Endothelial cell of umbilical vein (primary cell): ENCODE measurements at regions of chr1 and their contacts with region 1.

Region 1: DNA sequence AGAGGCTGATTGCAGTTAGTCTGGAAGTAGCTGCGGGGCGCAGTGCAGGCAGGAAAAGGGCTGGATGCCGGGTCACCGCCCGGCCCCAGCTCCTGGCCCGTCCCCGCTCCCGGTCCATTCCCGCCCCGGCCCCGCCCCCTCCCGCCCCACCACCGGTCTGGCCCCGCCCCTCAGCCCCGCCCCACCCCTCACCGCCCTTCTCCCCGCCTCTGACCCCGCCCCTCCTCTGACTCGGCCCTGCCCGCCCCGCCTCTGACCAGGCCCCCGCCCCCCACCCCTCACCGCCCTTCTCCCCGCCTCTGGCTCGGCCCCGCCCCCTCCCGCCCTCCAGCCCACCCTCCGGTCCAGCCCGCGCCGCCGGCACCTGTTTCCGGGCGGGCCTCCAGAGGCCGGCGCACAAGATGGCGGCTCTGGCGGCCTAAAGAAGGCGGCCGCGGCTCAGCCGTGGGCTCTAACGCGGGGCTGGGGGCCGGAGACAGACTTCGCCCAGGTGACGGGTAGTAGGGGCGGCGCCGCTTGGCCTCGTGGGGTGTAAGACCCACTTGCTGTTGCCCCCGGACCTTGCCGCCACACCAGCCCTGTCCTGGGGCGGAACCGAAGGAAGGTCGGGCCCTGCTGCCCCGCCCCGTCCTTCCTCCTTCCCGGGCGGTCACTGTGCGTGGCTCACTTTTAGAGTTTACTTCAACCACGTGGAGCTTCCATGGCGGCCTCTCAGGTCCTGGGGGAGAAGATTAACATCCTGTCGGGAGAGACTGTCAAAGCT is at the start of gene UBIAD1:
- DNase-seq: peak; percentile 87
- H3K4me3 ChIP-seq: peak within 1 kb of the TSS; percentile 52 to 77 (median 66)
- H3K27ac ChIP-seq: peak within 1 kb of the TSS; percentile 93
- H3K4me1 ChIP-seq: peaks cover 13% of the 10 kb centered on the region
- H3K27me3 ChIP-seq: no peaks in the 10 kb centered on the region
- CTCF ChIP-seq: no peak
- POLR2A ChIP-seq: peak; percentile 80
- total RNA-seq, gene UBIAD1: 12.7 and 13.0 TPM in 2 replicates

Region 2: DNA sequence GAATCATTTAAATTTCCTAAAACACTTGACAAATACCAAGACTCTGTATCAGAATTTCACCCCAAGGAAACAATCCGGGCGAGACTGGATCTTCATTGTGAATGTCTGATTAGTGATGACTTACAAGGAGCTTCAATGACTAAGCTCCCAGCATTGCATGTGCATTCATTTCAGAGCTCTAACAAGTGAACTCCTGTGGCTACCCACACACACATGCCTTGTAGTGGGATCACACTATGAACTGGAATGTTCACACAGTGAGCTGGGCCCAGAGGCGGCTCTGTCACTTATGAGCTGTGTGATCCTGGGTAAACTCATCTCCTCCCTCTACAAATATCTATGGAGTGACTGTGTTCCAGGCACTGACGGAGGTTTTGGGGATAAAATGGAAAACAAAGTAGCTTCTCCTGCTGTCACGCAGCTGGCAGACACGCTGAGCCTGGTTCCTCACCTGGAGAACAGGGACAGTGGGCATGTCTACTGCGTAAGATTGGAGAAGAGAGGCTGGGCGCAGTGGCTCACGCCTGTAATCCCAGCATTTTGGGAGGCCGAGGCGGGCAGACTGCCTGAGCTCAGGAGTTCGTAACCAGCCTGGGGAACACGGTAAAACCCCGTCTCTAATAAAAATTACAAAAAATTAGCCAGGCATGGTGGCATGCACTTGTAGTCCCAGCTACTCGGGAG is 1506.1 kb before region 1 on chr1:
- CTCF ChIA-PET with region 1: no interaction called
- POLR2A ChIA-PET with region 1: no interaction called
- dilution Hi-C with region 1: no loop called
- intact Hi-C with region 1: no loop called
- DNase-seq: no peak
- H3K4me3 ChIP-seq: no peak overlapping the region
- H3K27ac ChIP-seq: no peak overlapping the region
- H3K4me1 ChIP-seq: no peaks in the 10 kb centered on the region
- H3K27me3 ChIP-seq: no peaks in the 10 kb centered on the region
- CTCF ChIP-seq: no peak
- POLR2A ChIP-seq: no peak

Region 3: DNA sequence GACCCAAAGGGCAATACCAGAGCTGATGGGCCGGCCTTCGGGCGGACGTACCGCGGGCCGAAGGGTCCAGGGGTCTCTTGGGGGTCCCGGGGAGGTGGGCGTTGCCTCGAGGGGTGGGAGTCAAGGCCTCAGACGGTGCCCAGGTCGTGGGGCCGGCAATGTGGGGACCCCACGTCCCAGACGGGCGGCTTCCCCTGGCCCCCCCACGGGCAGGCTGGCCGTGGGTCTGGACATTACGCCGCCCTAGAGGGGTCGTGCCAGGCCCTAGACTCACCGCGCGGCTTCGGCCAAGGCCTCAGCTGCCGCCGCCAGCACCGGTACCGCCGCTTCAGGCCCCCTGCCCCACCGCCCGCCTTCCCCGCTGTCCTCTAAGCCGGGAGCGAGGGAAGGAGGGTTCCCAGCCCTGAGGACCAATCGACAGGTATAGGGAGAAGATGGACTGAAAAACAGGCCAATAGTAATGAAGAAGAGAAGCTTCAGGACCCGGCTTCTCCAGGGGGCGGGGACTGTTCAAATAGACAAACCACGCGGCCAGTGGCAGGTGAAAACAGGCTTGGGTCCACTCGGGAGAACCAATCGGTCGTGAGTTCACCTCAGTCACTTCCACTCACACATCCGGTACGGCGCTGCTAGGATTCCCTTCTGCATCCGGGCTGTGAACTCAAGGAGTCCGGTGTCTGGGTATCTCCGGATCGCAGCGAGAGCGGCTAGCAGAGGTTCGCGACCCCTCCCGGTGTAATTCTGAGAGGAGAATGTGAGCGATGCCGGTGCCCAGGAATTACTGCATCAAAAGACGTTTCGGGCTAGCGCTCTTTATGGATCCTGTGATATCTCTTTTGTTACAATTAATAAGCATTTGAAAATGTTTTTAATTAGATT is 10.6 kb before region 1 on chr1 and contains the start of gene MTOR:
- CTCF ChIA-PET with region 1: interaction called, 17 read pairs
- POLR2A ChIA-PET with region 1: interaction called, 8 read pairs
- dilution Hi-C with region 1: no loop called
- intact Hi-C with region 1: loop called (anchors 1 kb)
- DNase-seq: peak; percentile 100
- H3K4me3 ChIP-seq: peak within 1 kb of the TSS; percentile 92 to 99 (median 94)
- H3K27ac ChIP-seq: peak within 1 kb of the TSS; percentile 61
- H3K4me1 ChIP-seq: peaks cover 10% of the 10 kb centered on the region
- H3K27me3 ChIP-seq: no peaks in the 10 kb centered on the region
- CTCF ChIP-seq: peak in 1 of 2 donors; percentile 4
- POLR2A ChIP-seq: peak; percentile 78
- total RNA-seq, gene MTOR: 50.4 and 53.1 TPM in 2 replicates

Region 4: GRCh38 chr1:11285883-11286734 is 13.1 kb after region 1 on chr1:
- CTCF ChIA-PET with region 1: interaction called, 14 read pairs
- POLR2A ChIA-PET with region 1: interaction called, 4 read pairs
- dilution Hi-C with region 1: no loop called
- intact Hi-C with region 1: no loop called
- DNase-seq: peak; percentile 18
- H3K4me3 ChIP-seq: no peak overlapping the region
- H3K27ac ChIP-seq: no peak overlapping the region
- H3K4me1 ChIP-seq: peaks cover 12% of the 10 kb centered on the region
- H3K27me3 ChIP-seq: no peaks in the 10 kb centered on the region
- CTCF ChIP-seq: no peak
- POLR2A ChIP-seq: no peak

Region 5: DNA sequence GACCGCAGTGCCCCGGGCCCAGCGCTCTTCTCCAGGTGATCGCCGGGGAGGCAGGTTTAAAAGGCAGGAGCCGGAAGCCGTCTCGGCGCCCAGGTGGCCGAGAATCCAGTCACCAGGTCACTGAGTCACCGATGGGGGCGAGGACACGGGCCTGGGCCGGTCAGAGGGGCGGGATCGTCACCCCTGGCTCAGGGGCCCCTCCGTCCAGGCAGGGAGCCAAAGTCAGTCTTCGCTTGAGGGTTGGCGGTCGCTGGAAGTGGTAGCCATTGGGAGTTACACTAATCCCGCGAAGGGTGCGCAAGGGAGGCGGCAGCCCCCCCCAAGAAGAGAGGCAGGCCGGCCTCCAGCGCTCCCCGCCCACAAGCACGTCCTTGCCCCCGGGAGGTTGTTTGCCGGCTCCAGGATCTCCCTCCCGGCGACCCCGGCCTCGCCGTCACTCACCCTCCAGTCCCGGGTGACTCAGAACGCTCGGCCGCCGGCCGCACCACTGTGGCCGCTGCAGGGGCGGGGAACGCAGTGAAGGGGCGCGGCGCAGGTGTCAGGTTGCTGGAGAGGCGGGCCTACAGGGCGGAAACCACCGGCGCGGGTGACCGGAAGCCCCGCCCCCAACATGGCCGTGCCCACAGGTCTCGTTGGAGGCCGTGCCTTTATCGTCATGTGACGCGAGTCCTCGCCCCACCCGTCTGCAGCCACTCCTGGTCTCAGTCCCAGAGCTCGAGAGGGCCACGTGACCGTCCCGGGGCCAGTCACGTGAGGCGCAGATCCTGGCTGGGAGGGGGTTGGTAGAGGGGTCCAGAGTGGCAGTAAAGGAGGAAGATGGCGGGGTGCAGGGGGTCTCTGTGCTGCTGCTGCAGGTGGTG is 532.7 kb after region 1 on chr1 and contains the starts of genes CLCN6 and MTHFR:
- CTCF ChIA-PET with region 1: no interaction called
- POLR2A ChIA-PET with region 1: no interaction called
- dilution Hi-C with region 1: no loop called
- intact Hi-C with region 1: loop called (anchors 10 kb)
- DNase-seq: peak; percentile 100
- H3K4me3 ChIP-seq: peak within 1 kb of the TSS; percentile 75 to 97 (median 93)
- H3K27ac ChIP-seq: peak within 1 kb of the TSS; percentile 85
- H3K4me1 ChIP-seq: peaks cover 51% of the 10 kb centered on the region
- H3K27me3 ChIP-seq: no peaks in the 10 kb centered on the region
- CTCF ChIP-seq: no peak
- POLR2A ChIP-seq: peak; percentile 58
- total RNA-seq, gene CLCN6: 41.2 and 43.3 TPM in 2 replicates
- total RNA-seq, gene MTHFR: 25.3 and 26.5 TPM in 2 replicates